Endothelial cell of umbilical vein (primary cell): ENCODE measurements at regions of chr14 and their contacts with region 1.

Region 1: GRCh38 chr14:92106143-92106926 is at the start of gene ATXN3:
- DNase-seq: peak; percentile 96
- H3K4me3 ChIP-seq: peak within 1 kb of the TSS; percentile 63 to 90 (median 83)
- H3K27ac ChIP-seq: peak within 1 kb of the TSS; percentile 56
- H3K4me1 ChIP-seq: peaks cover 5% of the 10 kb centered on the region
- H3K27me3 ChIP-seq: peaks cover 0 to 1% of the 10 kb centered on the region in 2 experiments
- CTCF ChIP-seq: peak; percentile 69 to 89
- POLR2A ChIP-seq: peak; percentile 86
- total RNA-seq, gene ATXN3: 28.1 and 30.2 TPM in 2 replicates

Region 2: DNA sequence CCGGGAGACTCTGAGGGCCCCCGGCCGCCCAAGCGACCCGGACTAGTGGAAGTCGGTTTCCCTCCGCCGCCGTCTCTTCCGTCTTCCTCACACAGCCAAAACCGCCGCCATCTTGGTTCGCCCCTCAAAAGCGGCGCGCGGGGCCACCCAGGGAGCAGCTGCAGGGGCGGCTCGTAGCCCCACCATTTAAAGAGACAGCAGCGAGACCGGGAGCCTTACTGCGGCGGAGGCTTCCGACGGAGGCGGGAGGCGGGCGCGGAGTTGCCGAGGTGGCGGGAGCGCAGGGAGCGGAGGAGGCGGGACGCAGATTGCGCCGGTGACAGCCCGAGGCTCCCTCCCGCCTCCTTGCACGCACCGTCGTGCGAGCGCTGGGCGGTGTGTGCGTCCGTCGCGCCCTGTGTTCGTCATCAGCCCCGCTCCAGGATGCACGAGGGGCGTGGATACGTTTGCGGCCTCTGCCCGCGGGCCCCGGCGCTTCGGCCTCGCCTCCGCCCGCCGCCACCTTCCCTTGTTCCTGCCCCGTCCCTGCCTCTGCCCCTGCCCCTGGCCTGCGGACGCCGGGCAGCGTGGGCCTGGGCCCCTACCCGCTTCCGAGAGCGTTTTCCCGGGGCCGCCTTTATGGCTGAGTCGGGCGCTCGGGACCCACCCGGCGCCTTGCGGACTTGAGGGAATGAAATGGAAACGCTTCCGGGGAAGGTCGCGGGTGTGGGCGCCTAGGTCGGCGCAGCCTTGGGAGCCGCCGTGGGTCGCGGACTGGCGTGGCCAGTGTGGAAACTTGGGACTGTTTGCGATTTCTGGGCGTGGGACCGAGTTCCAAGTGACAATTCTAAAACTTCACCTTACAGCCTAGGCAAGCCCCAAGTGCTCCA is 595.9 kb before region 1 on chr14 and contains the start of gene PPP4R3A:
- CTCF ChIA-PET with region 1: no interaction called
- POLR2A ChIA-PET with region 1: no interaction called
- dilution Hi-C with region 1: no loop called
- intact Hi-C with region 1: loop called (anchors 1 kb)
- DNase-seq: peak; percentile 96
- H3K4me3 ChIP-seq: peak within 1 kb of the TSS; percentile 56 to 97 (median 85)
- H3K27ac ChIP-seq: peak within 1 kb of the TSS; percentile 83
- H3K4me1 ChIP-seq: peaks cover 17% of the 10 kb centered on the region
- H3K27me3 ChIP-seq: no peaks in the 10 kb centered on the region
- CTCF ChIP-seq: no peak
- POLR2A ChIP-seq: peak; percentile 89
- total RNA-seq, gene PPP4R3A: 77.0 and 83.5 TPM in 2 replicates

Region 3: GRCh38 chr14:91980127-91980741 is 126.1 kb before region 1 on chr14:
- CTCF ChIA-PET with region 1: interaction called, 4 read pairs
- POLR2A ChIA-PET with region 1: no interaction called
- dilution Hi-C with region 1: no loop called
- intact Hi-C with region 1: loop called (anchors 5 kb)
- DNase-seq: peak; percentile 94
- H3K4me3 ChIP-seq: no peak overlapping the region
- H3K27ac ChIP-seq: peak overlapping the region; percentile 71
- H3K4me1 ChIP-seq: peaks cover 34% of the 10 kb centered on the region
- H3K27me3 ChIP-seq: no peaks in the 10 kb centered on the region
- CTCF ChIP-seq: no peak
- POLR2A ChIP-seq: no peak

Region 4: DNA sequence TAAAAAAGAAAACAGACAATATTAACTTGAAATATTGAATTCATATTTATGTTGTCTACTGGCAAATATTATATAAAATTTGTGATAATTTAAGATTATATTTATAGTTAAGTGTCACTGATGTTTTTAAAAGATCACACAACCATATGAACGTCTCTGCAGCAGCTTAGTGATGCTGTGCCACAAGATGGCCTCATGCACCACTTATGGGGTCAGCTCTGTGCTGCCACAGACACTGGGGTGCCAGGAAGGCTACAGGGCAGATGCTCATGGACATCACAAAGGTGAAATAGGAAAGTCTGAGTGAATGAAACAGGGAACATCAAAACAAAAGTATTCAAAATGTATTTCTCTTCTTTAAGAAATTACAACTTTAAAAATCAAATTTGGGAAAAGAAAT is 13.0 kb before region 1 on chr14:
- CTCF ChIA-PET with region 1: interaction called, 10 read pairs
- POLR2A ChIA-PET with region 1: interaction called, 5 read pairs
- dilution Hi-C with region 1: no loop called
- intact Hi-C with region 1: no loop called
- DNase-seq: no peak
- H3K4me3 ChIP-seq: no peak overlapping the region
- H3K27ac ChIP-seq: no peak overlapping the region
- H3K4me1 ChIP-seq: no peaks in the 10 kb centered on the region
- H3K27me3 ChIP-seq: no peaks in the 10 kb centered on the region
- CTCF ChIP-seq: no peak
- POLR2A ChIP-seq: no peak

Region 5: GRCh38 chr14:92135267-92135666 is 28.9 kb after region 1 on chr14:
- CTCF ChIA-PET with region 1: interaction called, 11 read pairs
- POLR2A ChIA-PET with region 1: no interaction called
- dilution Hi-C with region 1: no loop called
- intact Hi-C with region 1: no loop called
- DNase-seq: peak; percentile 49
- H3K4me3 ChIP-seq: no peak overlapping the region
- H3K27ac ChIP-seq: no peak overlapping the region
- H3K4me1 ChIP-seq: no peaks in the 10 kb centered on the region
- H3K27me3 ChIP-seq: no peaks in the 10 kb centered on the region
- CTCF ChIP-seq: peak; percentile 14 to 35
- POLR2A ChIP-seq: no peak

Region 6: DNA sequence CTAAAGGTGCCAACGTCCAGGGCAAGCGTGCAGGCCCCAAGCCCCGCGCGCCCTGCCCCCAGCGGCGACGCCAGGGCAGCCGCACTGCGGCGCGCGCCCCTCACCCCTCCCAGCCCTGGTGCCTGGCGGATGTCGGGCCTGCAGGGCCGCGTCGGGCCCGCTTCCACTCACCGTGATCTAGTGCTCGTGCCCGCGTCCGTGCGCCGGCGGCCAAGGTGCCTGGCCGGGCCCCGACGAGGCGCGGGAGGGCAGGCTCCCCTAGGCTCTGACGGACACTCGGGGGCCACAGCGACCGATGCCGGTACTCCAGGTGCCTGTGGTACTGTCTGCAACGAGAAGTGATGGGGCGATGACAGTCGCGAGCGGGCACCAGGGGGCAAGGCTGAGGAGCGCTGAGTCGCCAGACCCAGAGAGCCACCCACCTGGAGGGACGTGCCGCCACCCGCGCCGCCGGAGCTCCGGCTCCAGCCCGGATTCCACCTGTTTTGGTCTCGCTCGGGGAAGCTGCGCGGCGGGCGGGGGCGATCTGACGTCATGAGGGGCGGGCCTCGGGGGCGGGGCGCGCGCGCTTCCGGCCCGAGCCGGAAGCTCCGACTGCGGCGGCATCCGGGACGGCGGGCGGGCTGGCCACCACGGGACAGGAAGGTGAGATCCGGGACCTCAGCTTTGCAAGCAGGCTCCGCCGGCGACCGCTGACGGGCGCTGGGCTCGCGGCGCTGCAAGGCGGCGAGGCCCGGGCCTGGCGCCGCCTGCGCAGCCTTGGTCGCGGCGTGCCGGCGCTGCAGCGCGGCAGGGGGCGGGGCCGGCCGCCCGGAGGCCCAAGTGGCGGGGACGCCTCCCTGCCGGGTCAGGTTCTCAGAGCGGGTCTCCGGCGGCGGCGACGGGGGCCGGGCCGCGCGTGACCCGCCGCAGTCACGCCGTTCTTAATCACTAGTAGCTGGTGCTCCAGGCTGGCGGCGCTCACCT is 1078.3 kb after region 1 on chr14 and contains the starts of genes LYSET and MOAP1:
- CTCF ChIA-PET with region 1: no interaction called
- POLR2A ChIA-PET with region 1: no interaction called
- dilution Hi-C with region 1: no loop called
- intact Hi-C with region 1: loop called (anchors 10 kb)
- DNase-seq: peak; percentile 88
- H3K4me3 ChIP-seq: peak within 1 kb of the TSS; percentile 58 to 98 (median 96)
- H3K27ac ChIP-seq: peak within 1 kb of the TSS; percentile 98
- H3K4me1 ChIP-seq: peaks cover 21% of the 10 kb centered on the region
- H3K27me3 ChIP-seq: no peaks in the 10 kb centered on the region
- CTCF ChIP-seq: peak in 1 of 2 donors; percentile 27
- POLR2A ChIP-seq: peak; percentile 91
- total RNA-seq, gene LYSET: 18.4 and 18.8 TPM in 2 replicates
- total RNA-seq, gene MOAP1: 15.0 and 16.6 TPM in 2 replicates